ENCODE measurements at regions of chr12 and their contacts with region 1.

Region 1: DNA sequence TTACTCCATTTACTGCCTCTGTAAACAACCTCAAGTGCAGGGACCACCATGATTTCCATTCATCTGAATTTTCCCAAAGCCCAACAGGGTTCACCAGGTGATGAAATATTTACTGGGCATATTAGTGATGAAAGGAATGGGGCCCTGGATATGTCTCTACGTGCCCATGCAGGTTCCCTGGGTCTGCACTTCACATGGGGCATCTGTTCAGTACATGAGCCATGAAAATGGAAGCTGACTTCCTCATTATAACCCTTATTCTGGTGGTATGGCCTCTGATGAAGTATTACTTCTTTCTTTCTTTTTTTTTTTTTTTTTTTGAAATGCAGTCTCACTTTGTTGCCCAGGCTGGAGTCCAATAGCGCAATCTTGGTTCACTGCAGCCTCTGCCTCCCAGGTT is 26.5 kb upstream of the CORO1C start:
- DNase-seq: no peak
- ATAC-seq: no peak

Region 2: DNA sequence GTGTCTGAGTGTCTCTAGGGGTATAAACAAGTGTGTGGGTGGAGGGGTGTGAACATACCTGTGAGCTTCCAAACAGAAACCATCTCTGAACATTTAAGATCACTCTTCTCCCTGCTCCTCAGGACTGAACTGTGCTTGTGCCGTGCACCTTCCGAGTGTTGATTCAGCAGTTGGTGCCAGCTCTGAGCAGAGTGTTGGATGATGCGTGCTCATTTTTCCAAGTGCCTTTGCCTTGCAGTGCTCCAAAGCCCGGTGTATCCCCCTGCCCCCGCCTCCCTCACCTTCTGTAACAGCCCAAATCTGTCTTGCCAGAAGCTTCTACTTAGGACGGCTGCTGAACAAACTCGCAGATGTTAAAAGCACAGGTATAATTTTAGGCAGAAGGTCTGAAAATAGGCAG is 624.4 kb before region 1 on chr12:
- intact Hi-C with region 1: loop called (anchors 5 kb)
- DNase-seq: no peak
- ATAC-seq: peak; percentile 10

Region 3: GRCh38 chr12:108356835-108357806 is 400.7 kb before region 1 on chr12:
- intact Hi-C with region 1: loop called (anchors 5 kb)
- DNase-seq: no peak
- ATAC-seq: no peak

Measured in sciatic nerve (tissue), 2 donors.